ENCODE measurements at regions of chr16 and their contacts with region 1.

Region 1: DNA sequence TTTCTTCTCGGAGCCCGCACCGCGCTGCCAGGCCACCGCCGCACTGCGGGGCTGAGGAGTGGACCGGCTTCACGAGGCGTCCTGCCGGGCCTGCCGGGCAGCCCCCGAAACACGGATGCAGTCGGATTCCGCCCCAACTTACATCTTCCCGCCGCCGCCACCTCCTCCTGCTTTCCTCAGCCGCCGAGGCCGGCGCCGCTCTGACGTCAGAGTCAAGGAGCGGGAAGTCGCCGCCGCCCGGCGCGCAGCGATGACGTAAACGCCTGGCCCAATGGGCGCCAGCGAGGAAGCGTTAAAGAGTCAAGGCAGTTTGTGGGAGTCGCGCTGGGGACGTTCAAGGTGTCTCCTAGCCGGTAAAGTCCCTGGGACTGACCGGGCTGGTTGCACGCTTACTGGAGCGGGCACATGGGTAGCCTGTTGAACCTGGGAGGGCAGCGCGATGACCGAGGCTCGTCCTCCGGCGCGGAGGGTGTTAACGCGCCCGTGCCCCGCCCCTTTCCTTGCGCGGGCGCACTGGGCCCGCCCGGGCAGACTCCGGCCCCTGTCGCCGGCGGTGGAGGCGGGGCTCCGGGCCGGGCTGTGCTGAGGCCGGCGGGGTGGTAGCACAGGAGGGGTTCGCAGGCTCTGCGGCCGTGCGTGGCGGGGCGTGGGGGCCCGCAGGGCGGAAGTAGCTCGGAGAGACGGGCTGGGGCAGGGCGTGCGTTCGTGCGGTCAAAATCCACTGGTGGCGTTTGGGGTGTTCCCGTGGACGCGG is at the start of gene RNPS1:
- DNase-seq: peak; percentile 93 to 98 (median 96)
- H3K4me3 ChIP-seq: peak within 1 kb of the TSS; percentile 67 to 88 (median 72)
- H3K4me3 Mint-ChIP-seq: peak within 1 kb of the TSS; percentile 86 to 96
- H3K27ac ChIP-seq: peak within 1 kb of the TSS; percentile 92 to 97
- H3K27ac Mint-ChIP-seq: peak within 1 kb of the TSS; percentile 95 to 100 (median 99)
- H3K4me1 ChIP-seq: peaks cover 27 to 41% of the 10 kb centered on the region in 2 donors
- H3K4me1 Mint-ChIP-seq: peaks cover 39% of the 10 kb centered on the region
- H3K27me3 ChIP-seq: no peaks in the 10 kb centered on the region
- H3K27me3 Mint-ChIP-seq: peaks cover 0 to 4% (median 2%) of the 10 kb centered on the region in 3 donors
- CTCF ChIP-seq: no peak
- polyA plus RNA-seq, gene RNPS1: 93.7 to 176 (median 106) TPM

Region 2: DNA sequence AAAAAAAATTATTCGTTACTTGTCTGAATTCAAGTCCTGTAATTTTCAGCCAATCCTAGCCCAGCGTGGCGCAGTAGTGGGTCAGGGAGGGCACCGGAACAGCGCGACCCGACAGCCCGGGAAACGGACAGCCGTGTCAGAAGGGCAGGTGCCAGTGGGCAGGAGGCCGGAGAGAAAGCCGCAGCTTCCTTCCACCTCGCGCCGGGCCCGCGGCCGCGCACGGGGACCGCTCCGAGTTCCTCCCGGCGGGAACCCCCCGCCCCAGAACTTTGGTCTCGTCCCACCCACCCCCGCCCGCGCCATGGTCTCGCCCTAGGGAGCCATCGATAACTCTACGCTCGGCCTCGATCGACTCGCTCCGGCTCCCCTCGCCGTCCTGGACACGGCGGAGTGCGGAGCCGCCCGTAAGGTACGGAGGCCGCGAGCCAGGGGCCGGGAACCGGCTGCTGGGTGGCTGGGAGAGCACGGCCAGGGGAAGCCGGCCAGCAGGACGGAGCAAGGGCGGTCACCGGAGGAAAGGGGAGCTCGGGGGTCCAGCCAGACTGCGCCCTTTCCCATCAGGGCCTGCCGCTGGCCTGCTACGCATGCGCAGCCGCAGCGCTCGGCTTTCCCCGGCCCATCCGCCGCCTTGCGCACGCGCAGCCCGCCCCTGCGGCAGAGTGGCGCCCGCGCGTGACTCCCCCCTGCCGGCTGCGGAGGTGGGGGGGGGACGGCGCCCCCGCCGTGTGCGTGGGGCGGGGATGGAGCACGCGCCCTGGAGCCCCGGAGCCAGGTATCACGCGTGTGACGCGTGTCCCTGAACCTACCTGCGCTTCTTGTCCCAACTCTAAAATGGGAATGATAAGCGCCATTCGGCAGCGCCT is 62.8 kb before region 1 on chr16 and contains the start of gene MLST8:
- intact Hi-C with region 1: loop called (anchors 5 kb)
- DNase-seq: peak; percentile 85 to 94 (median 93)
- H3K4me3 ChIP-seq: peak within 1 kb of the TSS; percentile 64 to 92 (median 77)
- H3K4me3 Mint-ChIP-seq: peak within 1 kb of the TSS; percentile 76 to 77
- H3K27ac ChIP-seq: peak within 1 kb of the TSS; percentile 60 to 83
- H3K27ac Mint-ChIP-seq: peak within 1 kb of the TSS; percentile 63 to 92 (median 81)
- H3K4me1 ChIP-seq: peaks cover 23 to 27% of the 10 kb centered on the region in 2 donors
- H3K4me1 Mint-ChIP-seq: peaks cover 25% of the 10 kb centered on the region
- H3K27me3 ChIP-seq: peaks cover 0 to 2% of the 10 kb centered on the region in 2 donors
- H3K27me3 Mint-ChIP-seq: peaks cover 4 to 14% (median 6%) of the 10 kb centered on the region in 3 donors
- CTCF ChIP-seq: peak; percentile 26
- polyA plus RNA-seq, gene MLST8: 29.9 to 54.3 (median 30.5) TPM

Region 3: DNA sequence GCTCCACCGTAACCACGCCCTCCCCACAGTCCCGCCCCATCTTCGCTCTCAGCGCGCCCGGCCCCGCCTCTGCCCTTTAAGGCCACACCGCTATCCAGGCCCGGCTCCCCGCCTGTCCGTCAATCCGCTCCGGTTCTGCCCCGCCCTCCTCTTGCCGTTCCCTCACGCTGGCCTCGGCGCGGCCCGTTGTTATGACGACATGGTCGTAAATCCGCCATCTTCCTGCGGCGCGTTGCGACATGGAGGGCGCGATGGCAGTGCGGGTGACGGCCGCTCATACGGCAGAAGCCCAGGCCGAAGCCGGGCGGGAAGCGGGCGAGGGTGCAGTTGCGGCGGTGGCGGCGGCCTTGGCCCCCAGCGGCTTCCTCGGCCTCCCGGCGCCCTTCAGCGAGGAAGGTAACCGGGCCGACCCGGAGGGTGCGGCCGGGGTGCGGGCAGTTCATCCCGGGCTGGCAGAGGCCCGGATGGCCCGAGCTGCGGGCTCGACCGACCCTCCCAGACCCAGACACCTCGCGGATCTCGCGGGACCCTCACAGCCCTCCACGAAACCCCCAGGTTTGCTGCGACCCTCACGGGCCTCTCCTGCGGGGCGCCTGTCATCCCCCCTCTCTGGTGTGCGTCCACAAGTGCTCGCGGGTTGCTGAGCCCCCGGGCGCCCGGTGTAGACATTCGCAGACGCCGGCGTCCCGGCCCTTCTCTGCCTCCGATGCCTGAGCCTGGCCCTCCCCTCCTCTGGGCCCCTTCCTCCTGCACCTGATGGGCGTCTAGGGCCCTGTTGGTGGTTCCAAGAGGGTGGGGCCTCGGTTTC is 44.5 kb before region 1 on chr16 and contains the start of gene E4F1:
- intact Hi-C with region 1: loop called in 1 of 2 experiments (anchors 5 kb)
- DNase-seq: peak; percentile 98 to 100 (median 100)
- H3K4me3 ChIP-seq: peak within 1 kb of the TSS; percentile 64 to 95 (median 83)
- H3K4me3 Mint-ChIP-seq: peak within 1 kb of the TSS; percentile 75 to 86
- H3K27ac ChIP-seq: peak within 1 kb of the TSS; percentile 60 to 87
- H3K27ac Mint-ChIP-seq: peak within 1 kb of the TSS; percentile 46 to 86 (median 77)
- H3K4me1 ChIP-seq: peaks cover 13 to 17% of the 10 kb centered on the region in 2 donors
- H3K4me1 Mint-ChIP-seq: peaks cover 22% of the 10 kb centered on the region
- H3K27me3 ChIP-seq: no peaks in the 10 kb centered on the region
- H3K27me3 Mint-ChIP-seq: peaks cover 0 to 3% (median 1%) of the 10 kb centered on the region in 3 donors
- CTCF ChIP-seq: no peak
- polyA plus RNA-seq, gene E4F1: 4.9 to 50.9 (median 5.8) TPM

Region 4: GRCh38 chr16:2507052-2507659 is 239.1 kb after region 1 on chr16:
- intact Hi-C with region 1: loop called (anchors 5 to 10 kb)
- DNase-seq: peak; percentile 43 to 66 (median 62)
- H3K4me3 ChIP-seq: peak overlapping the region in 2 of 3 experiments; percentile 24 to 70
- H3K4me3 Mint-ChIP-seq: peak overlapping the region; percentile 74 to 89
- H3K27ac ChIP-seq: peak overlapping the region; percentile 92 to 98
- H3K27ac Mint-ChIP-seq: peak overlapping the region; percentile 97 to 98 (median 98)
- H3K4me1 ChIP-seq: peaks cover 70 to 82% of the 10 kb centered on the region in 2 donors
- H3K4me1 Mint-ChIP-seq: peaks cover 70% of the 10 kb centered on the region
- H3K27me3 ChIP-seq: no peaks in the 10 kb centered on the region
- H3K27me3 Mint-ChIP-seq: peaks cover 1 to 3% (median 1%) of the 10 kb centered on the region in 3 donors
- CTCF ChIP-seq: no peak

Measured in CD14-positive monocyte (primary cell).